ENCODE measurements at regions of chr3 and their contacts with region 1.

Region 1: GRCh38 chr3:73727117-73727821 is 102.5 kb upstream of the PDZRN3 start:
- DNase-seq: peak in 1 of 2 donors; percentile 40
- ATAC-seq: peak; percentile 46 to 49
- H3K4me3 ChIP-seq: no peak overlapping the region
- H3K27ac ChIP-seq: peak overlapping the region; percentile 32 to 54 (median 47)
- H3K4me1 ChIP-seq: peaks cover 19 to 27% of the 10 kb centered on the region in 2 donors
- H3K27me3 ChIP-seq: no peaks in the 10 kb centered on the region
- CTCF ChIP-seq: no peak
- POLR2A ChIP-seq: no peak

Region 2: DNA sequence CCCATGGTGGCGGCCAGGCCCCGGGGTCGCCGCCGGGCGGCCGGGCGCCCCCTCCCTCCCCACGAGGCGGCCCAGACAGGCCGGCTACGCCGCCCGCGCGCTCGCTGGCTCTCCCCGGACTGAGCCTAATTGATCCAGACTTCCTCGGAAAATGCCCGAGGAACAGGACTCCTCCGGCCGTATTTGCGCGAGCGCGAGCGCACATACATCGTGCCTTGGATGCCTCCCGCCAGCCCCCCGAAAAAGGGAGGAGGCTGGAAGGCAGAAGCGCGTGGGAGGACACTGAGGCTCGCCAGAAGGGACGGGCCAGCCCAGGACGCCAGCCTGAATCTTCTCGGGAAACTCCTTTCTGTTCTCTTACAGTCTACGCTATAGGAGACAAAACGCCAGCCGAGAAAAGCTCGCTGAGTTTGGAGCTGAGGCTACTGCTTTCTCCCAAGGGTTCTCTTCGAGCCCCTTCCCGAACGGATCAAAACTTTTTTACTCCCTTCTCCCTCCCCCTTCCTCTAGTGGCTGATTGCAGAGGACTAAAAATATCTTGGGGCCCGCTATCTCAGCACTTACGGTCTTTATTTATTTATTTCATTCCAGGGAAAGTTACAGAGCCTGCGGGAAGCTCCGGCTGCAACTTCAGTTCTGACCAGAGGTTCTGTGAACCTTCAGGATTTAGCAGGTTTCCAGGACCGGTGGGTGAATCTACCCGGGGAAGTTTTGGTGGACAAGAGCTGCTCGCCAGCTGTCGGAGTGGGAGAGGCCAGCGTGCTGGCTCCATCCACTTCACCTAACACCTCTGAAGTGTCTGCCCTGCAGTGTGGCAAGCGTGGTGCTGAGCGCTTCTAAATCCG is 102.2 kb before region 1 on chr3 and contains the start of gene PDZRN3:
- in situ Hi-C with region 1: no loop called
- intact Hi-C with region 1: loop called (anchors 2 kb)
- DNase-seq: peak; percentile 41 to 44
- ATAC-seq: peak; percentile 46 to 48
- H3K4me3 ChIP-seq: peak within 1 kb of the TSS; percentile 71 to 93 (median 78)
- H3K27ac ChIP-seq: peak within 1 kb of the TSS; percentile 89 to 94 (median 92)
- H3K4me1 ChIP-seq: peaks cover 34 to 56% of the 10 kb centered on the region in 2 donors
- H3K27me3 ChIP-seq: no peaks in the 10 kb centered on the region
- CTCF ChIP-seq: peak in 1 of 5 experiments; percentile 3
- POLR2A ChIP-seq: peak; percentile 64 to 83
- total RNA-seq, gene PDZRN3: 9.1 to 30.3 (median 24.7) TPM

Region 3: DNA sequence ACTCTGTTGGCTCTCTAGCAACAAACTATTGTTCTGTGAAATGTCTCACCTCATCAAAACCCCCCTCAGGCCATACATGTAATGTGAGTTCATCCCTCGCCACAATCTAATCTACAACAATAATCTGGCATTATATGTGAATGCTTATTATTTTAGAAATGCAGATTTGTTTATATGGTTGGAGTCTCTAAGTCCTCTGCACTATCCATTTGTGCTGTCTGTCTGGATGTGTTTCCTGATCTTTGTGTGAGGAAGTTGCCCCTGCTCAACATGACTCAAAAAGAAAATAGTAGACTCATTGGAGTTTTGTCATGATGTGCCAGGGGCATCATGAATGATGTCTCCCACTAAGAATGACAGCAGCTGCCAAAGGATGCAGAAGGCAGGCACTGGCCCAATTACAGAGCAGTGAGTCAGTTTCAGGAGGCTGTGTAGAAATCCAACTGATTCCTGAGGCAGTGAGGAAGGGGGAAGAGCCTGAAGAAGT is 59.1 kb after region 1 on chr3:
- in situ Hi-C with region 1: no loop called
- intact Hi-C with region 1: loop called (anchors 5 kb)
- DNase-seq: peak; percentile 30 to 59
- ATAC-seq: peak; percentile 77 to 94
- H3K4me3 ChIP-seq: no peak overlapping the region
- H3K27ac ChIP-seq: no peak overlapping the region
- H3K4me1 ChIP-seq: peaks cover under 1 to 28% of the 10 kb centered on the region in 2 donors
- H3K27me3 ChIP-seq: no peaks in the 10 kb centered on the region
- CTCF ChIP-seq: no peak
- POLR2A ChIP-seq: no peak

Region 4: DNA sequence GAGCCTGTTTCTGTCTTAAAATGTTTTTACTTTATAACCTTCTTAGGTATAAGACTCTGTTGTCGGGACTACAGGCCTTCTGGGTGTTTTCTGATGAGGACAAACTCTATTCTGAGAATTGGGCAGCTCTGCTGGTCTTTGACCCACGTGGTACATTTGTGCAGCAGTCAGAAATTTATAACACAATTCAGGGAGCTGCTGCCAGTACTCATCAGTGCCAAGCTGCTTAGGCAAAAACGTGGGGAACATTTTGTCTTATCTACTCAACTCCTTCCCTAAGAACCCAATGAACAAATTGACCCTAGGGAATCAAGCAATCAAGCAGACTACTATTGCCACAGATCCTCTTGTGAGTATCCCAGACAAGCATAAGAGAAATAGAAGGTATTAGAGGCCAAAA is 78.2 kb after region 1 on chr3:
- in situ Hi-C with region 1: no loop called
- intact Hi-C with region 1: loop called (anchors 2 kb)
- DNase-seq: peak; percentile 71 to 81
- ATAC-seq: peak; percentile 99
- H3K4me3 ChIP-seq: no peak overlapping the region
- H3K27ac ChIP-seq: peak overlapping the region; percentile 63 to 86 (median 72)
- H3K4me1 ChIP-seq: peaks cover 14 to 28% of the 10 kb centered on the region in 2 donors
- H3K27me3 ChIP-seq: no peaks in the 10 kb centered on the region
- CTCF ChIP-seq: no peak
- POLR2A ChIP-seq: no peak